Activated CD4-positive, alpha-beta T cell treated with anti-CD3 and anti-CD28 coated beads for 36 hours (primary cell): ENCODE measurements at regions of chr1 and their contacts with region 1.

Region 1: DNA sequence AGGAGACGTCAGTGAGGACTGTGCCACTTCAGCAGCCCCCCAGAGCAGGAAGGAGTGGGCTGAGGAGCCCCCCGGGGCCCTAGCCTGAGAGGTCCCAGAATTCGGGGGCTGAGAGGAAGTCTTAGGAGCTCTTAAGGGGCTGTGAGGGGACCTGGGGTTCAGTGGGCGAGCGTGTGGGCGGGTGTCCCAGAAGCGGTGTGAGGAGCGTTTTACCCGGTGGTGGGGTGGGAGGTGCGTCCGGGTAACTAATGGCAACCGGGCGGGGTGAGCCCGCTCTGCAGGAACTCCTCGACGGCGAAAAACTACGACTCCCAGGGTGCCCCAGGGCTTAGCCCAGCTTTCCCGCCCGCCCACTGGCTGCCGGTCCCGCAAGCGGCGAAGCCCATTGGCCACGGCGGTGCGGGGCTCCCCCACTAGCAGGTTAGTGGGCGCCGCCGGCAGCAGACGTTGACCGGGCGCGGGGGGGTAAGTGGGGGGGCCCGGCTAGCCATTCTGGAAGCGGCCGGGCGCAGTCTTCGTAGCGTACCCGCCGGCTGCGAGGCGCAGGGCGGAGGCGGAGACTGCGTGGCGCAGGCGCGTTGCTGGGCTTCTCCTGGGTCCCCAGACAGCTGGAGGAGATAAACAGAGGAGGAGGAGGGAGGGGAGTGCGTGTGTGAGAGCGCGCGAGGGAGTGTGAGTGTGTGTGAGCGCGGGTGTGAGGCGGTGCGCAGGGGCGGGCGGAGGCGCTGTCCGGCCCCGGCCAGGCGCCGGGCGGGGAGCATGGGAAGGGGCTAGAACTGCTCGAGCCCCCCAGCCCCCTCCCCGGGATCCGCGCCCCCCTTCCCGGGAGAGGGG is at the start of gene WDTC1:
- DNase-seq: peak; percentile 99
- ATAC-seq: peak; percentile 95
- H3K4me3 Mint-ChIP-seq: peak within 1 kb of the TSS; percentile 95
- H3K27ac Mint-ChIP-seq: peak within 1 kb of the TSS; percentile 93
- H3K4me1 Mint-ChIP-seq: peaks cover 27% of the 10 kb centered on the region
- H3K27me3 Mint-ChIP-seq: no peaks in the 10 kb centered on the region
- total RNA-seq, gene WDTC1: 19.3 to 21.9 TPM

Region 2: GRCh38 chr1:26900001-26900814 is 334.1 kb before region 1 on chr1 and contains the start of gene GPATCH3:
- CTCF ChIA-PET with region 1: no interaction called
- POLR2A ChIA-PET with region 1: no interaction called
- intact Hi-C with region 1: loop called in 1 of 2 experiments (anchors 1 kb)
- DNase-seq: peak; percentile 95
- ATAC-seq: peak; percentile 93
- H3K4me3 Mint-ChIP-seq: peak within 1 kb of the TSS; percentile 94
- H3K27ac Mint-ChIP-seq: peak within 1 kb of the TSS; percentile 100
- H3K4me1 Mint-ChIP-seq: peaks cover 17% of the 10 kb centered on the region
- H3K27me3 Mint-ChIP-seq: no peaks in the 10 kb centered on the region
- total RNA-seq, gene GPATCH3: 7.0 to 8.7 TPM

Region 3: DNA sequence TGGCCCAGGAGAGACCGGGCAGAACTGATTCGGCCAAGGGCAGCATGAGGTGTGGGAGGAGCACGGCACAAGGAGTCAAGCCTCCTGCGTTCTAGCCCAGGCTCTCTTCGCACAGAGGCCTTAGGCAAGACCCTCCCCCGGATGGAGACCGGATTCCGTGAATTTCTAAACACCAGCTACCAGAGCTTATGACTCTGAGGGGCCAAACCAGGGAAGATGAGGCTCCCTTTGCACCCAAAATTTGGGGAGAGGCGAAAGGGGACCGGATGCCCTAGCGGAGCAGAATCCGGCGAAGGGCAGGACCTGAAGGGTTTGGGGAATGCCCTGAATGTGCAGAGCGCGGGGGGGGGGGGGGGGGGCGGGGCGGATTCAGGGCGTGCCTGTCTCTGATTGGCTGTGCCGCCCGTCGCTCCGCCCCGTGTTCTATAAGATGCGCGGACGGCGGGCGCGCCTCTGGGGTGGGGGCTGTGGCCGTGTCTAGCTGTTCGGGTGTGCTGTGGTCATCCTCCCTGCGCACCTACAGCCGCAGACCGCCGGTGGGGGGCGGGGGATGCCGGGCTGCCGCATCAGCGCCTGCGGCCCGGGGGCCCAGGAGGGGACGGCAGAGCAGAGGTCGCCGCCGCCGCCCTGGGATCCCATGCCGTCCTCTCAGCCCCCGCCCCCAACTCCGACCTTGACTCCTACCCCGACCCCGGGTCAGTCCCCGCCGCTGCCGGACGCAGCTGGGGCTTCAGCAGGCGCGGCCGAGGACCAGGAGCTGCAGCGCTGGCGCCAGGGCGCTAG is 240.8 kb before region 1 on chr1 and contains the start of gene TRNP1:
- CTCF ChIA-PET with region 1: no interaction called
- POLR2A ChIA-PET with region 1: no interaction called
- intact Hi-C with region 1: loop called in 1 of 2 experiments (anchors 1 kb)
- DNase-seq: peak; percentile 83
- ATAC-seq: peak; percentile 67
- H3K4me3 Mint-ChIP-seq: peak within 1 kb of the TSS; percentile 72
- H3K27ac Mint-ChIP-seq: peak within 1 kb of the TSS; percentile 63
- H3K4me1 Mint-ChIP-seq: peaks cover 19% of the 10 kb centered on the region
- H3K27me3 Mint-ChIP-seq: peaks cover 49% of the 10 kb centered on the region
- total RNA-seq, gene TRNP1: 0.62 to 0.69 TPM

Region 4: DNA sequence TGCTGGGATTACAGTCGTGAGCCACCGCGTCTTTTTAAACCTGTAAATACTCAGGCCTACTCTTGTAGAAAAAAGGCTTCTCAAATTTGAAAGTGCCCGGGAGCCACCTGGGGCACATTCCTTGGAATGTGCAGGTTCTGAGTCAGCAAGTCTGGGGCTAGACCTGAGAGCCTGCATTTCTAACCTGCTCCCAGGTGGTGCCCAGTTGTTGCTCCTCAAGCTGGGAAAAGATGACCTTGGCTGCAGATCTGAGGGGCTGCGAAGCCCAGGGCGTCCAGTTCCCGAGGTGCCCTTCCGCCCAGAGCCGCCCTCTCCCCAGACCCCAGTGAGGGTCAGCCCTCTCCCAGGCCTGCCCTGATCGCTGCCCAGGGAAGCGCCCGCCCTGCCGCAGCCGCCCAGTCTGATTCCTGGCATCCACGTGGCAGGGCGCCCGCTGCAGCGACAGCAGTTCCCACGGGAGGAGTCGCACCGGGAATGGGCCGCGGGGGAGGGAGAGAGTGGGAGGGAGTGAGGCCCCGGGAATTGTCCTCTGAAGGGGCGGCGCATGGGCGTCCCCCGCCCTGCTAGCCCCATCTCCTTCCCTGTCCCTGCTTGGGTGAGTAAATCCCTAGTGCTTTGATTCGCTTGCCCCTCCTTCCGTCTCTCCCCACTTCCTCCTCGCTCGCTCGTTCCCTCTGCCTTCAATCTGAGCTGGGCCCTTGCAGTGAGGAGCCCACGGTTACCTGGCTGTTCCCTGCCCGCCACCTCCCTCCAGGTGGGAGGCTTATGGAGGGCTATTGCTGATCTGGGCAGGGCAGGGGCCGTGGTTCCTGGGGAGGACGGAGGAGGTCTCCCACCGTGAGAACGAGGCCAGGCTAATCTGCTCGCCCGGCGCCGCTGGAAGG is 202.8 kb before region 1 on chr1:
- CTCF ChIA-PET with region 1: no interaction called
- POLR2A ChIA-PET with region 1: no interaction called
- intact Hi-C with region 1: no loop called
- DNase-seq: no peak
- ATAC-seq: no peak
- H3K4me3 Mint-ChIP-seq: no peak overlapping the region
- H3K27ac Mint-ChIP-seq: no peak overlapping the region
- H3K4me1 Mint-ChIP-seq: no peaks in the 10 kb centered on the region
- H3K27me3 Mint-ChIP-seq: peaks cover 4% of the 10 kb centered on the region

Region 5: GRCh38 chr1:27257155-27257554 is 22.9 kb after region 1 on chr1:
- CTCF ChIA-PET with region 1: interaction called, 3 read pairs
- POLR2A ChIA-PET with region 1: interaction called, 3 read pairs
- intact Hi-C with region 1: loop called (anchors 1 to 2 kb)
- DNase-seq: no peak
- ATAC-seq: no peak
- H3K4me3 Mint-ChIP-seq: no peak overlapping the region
- H3K27ac Mint-ChIP-seq: no peak overlapping the region
- H3K4me1 Mint-ChIP-seq: peaks cover 50% of the 10 kb centered on the region
- H3K27me3 Mint-ChIP-seq: no peaks in the 10 kb centered on the region

Region 6: DNA sequence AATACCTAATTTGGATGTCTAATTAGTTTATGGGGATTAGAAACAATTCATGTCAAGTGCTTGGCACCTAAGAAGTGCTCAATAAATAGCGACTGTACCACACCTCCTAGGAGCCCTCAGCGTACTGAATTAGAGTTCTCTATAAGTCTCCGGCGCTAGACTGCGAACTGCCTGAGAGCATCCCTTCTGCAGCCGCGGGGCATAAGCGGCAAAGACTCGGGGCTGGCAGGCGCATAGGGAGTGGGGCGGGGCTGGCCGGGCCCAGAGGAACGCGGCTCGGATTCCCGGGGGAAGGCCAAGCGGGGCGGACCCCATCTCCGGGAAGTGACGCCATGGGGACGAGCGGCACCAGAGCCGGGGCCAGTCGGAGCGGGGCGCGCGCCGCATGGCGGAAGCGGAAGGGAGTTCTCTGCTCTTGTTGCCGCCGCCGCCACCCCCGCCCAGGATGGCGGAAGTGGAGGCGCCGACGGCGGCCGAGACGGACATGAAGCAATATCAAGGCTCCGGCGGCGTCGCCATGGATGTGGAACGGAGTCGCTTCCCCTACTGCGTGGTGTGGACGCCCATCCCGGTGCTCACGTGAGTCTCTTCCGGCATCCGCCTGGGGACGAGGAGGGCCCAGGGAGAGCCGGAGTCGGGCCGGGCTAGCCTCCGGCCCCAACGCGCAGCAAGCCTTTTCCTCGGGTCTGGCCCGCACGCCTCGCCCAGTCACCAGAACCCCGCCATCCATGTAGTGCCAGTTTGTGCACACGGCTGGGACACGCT is 87.7 kb after region 1 on chr1 and contains the start of gene TMEM222:
- CTCF ChIA-PET with region 1: no interaction called
- POLR2A ChIA-PET with region 1: no interaction called
- intact Hi-C with region 1: loop called in 1 of 2 experiments (anchors 1 kb)
- DNase-seq: peak; percentile 99
- ATAC-seq: peak; percentile 98
- H3K4me3 Mint-ChIP-seq: peak within 1 kb of the TSS; percentile 94
- H3K27ac Mint-ChIP-seq: peak within 1 kb of the TSS; percentile 90
- H3K4me1 Mint-ChIP-seq: peaks cover 41% of the 10 kb centered on the region
- H3K27me3 Mint-ChIP-seq: no peaks in the 10 kb centered on the region
- total RNA-seq, gene TMEM222: 27.5 to 31.2 TPM

Region 7: GRCh38 chr1:27489910-27490741 is 255.9 kb after region 1 on chr1 and contains the start of gene WASF2:
- CTCF ChIA-PET with region 1: no interaction called
- POLR2A ChIA-PET with region 1: no interaction called
- intact Hi-C with region 1: loop called in 1 of 2 experiments (anchors 1 kb)
- DNase-seq: peak; percentile 98
- ATAC-seq: peak; percentile 96
- H3K4me3 Mint-ChIP-seq: peak within 1 kb of the TSS; percentile 98
- H3K27ac Mint-ChIP-seq: peak within 1 kb of the TSS; percentile 99
- H3K4me1 Mint-ChIP-seq: peaks cover 28% of the 10 kb centered on the region
- H3K27me3 Mint-ChIP-seq: no peaks in the 10 kb centered on the region
- total RNA-seq, gene WASF2: 104 to 132 TPM